Aorta (tissue), 5 donors: ENCODE measurements at regions of chr19 and their contacts with region 1.

Region 1: DNA sequence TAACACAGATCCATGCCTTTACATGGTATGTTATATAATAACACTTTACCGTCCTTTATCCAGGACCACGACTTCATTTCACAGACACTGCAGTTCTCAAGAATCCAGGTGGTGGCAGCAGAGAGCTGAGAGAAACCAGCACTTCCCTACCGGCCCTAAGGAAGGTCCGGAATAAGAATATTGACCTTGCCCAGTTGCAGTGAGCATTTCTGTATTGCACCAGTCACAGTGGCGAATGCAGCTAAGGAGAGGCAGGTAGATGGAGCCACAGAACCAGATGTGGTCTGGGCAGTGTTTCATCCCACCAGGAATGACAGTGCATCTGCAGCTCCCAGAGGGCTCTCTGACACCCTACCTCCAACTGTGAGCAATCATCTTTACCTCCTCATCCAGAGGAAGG is 44.6 kb downstream of the ZNF787 start:
- DNase-seq: no peak
- ATAC-seq: no peak
- H3K4me3 ChIP-seq: no peak overlapping the region
- H3K27ac ChIP-seq: no peak overlapping the region
- H3K4me1 ChIP-seq: no peaks in the 10 kb centered on the region
- H3K27me3 ChIP-seq: no peaks in the 10 kb centered on the region

Region 2: DNA sequence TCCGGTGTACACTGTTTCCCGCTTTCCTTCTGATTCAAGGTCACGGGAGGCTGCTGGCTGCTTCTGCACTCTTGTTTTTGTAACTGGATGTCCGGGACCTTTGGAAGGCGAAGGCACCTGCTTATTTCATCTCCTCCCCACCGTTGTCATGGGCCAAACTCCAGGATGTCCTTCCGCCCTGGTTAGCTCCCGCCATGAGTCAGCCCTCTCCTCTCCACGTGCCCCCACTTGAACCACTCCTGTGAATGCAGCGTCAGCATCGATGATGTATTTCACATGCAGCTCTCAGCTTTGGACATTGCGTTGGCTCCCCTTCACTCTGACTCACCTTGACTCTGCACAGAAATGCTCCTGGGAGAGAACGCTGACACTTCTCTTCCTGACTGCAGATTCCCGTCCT is 93.8 kb after region 1 on chr19:
- intact Hi-C with region 1: loop called (anchors 2 to 5 kb)
- DNase-seq: no peak
- ATAC-seq: no peak
- H3K4me3 ChIP-seq: no peak overlapping the region
- H3K27ac ChIP-seq: no peak overlapping the region
- H3K4me1 ChIP-seq: no peaks in the 10 kb centered on the region
- H3K27me3 ChIP-seq: no peaks in the 10 kb centered on the region

Region 3: GRCh38 chr19:56350416-56351045 is 274.0 kb after region 1 on chr19:
- intact Hi-C with region 1: loop called in 1 of 2 experiments (anchors 5 kb)
- DNase-seq: peak in 1 of 2 donors; percentile 47
- ATAC-seq: no peak
- H3K4me3 ChIP-seq: no peak overlapping the region
- H3K27ac ChIP-seq: no peak overlapping the region
- H3K4me1 ChIP-seq: no peaks in the 10 kb centered on the region
- H3K27me3 ChIP-seq: no peaks in the 10 kb centered on the region